GM12878 (cell line): ENCODE measurements at regions of chrX and their contacts with region 1.

Region 1: GRCh38 chrX:15854712-15855567 is at the start of gene AP1S2:
- DNase-seq: peak; percentile 90
- ATAC-seq: peak; percentile 94
- H3K4me3 ChIP-seq: peak within 1 kb of the TSS; percentile 90
- H3K27ac ChIP-seq: peak within 1 kb of the TSS; percentile 90
- H3K4me1 ChIP-seq: 0 out of 2 replicates have a peak, but pooled peaks cover 3% of the 10 kb centered on the region
- H3K27me3 ChIP-seq: no peaks in the 10 kb centered on the region
- CTCF ChIP-seq: no peak
- EP300 ChIP-seq: no peak; a peak in 1 of 4 replicates
- POLR2A ChIP-seq: peak; percentile 62
- RAD21 ChIP-seq: no peak
- polyA plus RNA-seq, gene AP1S2: 25.6 to 36.6 TPM

Region 2: DNA sequence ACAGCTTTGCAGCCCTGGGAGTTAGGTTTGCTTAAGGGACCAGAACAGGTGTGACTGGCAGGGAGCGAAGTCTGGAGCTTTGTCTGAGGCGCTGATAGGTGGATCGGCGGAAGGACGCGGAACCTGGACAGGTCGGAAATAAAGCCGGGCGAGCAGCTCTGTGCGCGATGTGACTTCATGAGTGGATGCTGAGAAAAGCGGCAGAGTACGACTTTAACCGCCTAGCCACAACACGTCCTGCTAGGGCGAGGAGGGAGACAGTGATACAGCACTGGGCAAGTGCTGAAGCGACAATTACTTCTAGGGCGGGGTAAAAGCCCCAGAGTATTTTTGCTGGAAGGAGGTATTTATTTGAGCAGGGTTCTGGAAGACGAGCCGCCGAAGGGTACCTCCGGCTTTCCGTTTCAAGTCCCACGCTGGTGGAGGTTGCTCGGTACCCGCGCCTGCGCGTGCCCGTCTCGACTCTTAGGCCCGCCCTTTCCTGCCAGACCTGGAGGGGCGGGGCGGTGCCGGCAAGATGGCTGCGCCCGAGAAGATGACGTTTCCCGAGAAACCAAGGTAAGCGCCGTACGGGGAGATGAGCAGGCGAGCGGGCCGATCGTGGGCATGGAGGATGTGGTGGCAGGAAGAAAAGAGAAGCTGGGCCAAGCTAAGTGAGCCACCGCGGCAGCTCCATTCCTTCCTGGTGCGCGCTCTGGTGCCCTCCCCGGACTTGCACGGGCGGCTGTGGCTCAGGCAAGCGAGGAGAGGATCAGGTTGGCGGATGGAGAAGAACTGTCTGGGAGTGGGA is 64.8 kb before region 1 on chrX and contains the start of gene ZRSR2:
- CTCF ChIA-PET with region 1: interaction called, 8 read pairs
- POLR2A ChIA-PET with region 1: interaction called, 18 read pairs
- RAD21 ChIA-PET with region 1: interaction called, 4 read pairs
- SMC1A ChIA-PET with region 1: interaction called, 16 read pairs
- in situ Hi-C with region 1: no loop called
- intact Hi-C with region 1: loop called (anchors 2 kb)
- DNase-seq: peak; percentile 58
- ATAC-seq: peak; percentile 96
- H3K4me3 ChIP-seq: peak within 1 kb of the TSS; percentile 71
- H3K27ac ChIP-seq: peak within 1 kb of the TSS; percentile 68
- H3K4me1 ChIP-seq: no peaks in the 10 kb centered on the region
- H3K27me3 ChIP-seq: no peaks in the 10 kb centered on the region
- CTCF ChIP-seq: no peak
- EP300 ChIP-seq: no peak
- POLR2A ChIP-seq: peak; percentile 88
- RAD21 ChIP-seq: no peak
- polyA plus RNA-seq, gene ZRSR2: 10.5 to 14.0 TPM

Region 3: DNA sequence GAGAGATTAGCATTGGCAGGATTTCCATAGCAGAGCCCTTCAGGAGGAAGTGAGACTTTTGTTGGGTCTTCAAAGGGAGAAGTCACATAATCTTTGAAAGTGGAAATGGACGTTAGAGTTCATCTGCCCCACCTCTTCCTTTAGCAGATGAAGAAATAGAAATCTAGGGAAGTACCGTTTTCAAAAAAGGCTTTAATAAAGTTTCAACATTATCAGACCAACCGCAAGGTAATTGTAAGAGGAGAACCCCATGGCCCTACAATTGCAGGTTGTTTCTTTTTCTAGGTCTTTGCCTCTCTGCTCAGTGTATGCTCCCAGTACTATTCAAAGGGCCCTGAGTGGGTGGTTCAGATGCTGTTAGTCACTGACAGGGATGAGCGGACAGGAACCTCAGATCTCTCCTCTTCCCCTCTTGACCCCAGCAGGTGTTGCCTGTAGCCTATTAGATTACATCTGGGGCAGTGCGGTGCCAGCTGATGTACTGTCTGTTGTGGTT is 48.3 kb after region 1 on chrX:
- CTCF ChIA-PET with region 1: interaction called, 6 read pairs
- POLR2A ChIA-PET with region 1: interaction called, 5 read pairs
- RAD21 ChIA-PET with region 1: interaction called, 20 read pairs
- SMC1A ChIA-PET with region 1: interaction called, 16 read pairs
- in situ Hi-C with region 1: no loop called
- intact Hi-C with region 1: loop called (anchors 1 kb)
- DNase-seq: peak; percentile 84
- ATAC-seq: peak; percentile 98
- H3K4me3 ChIP-seq: no peak overlapping the region
- H3K27ac ChIP-seq: peak overlapping the region; percentile 69
- H3K4me1 ChIP-seq: peaks cover 16% of the 10 kb centered on the region
- H3K27me3 ChIP-seq: no peaks in the 10 kb centered on the region
- CTCF ChIP-seq: no peak
- EP300 ChIP-seq: peak in 1 of 2 experiments; percentile 46; a peak in 1 of 4 replicates
- POLR2A ChIP-seq: no peak
- RAD21 ChIP-seq: no peak; the same call in 1 of the 2 replicates

Region 4: DNA sequence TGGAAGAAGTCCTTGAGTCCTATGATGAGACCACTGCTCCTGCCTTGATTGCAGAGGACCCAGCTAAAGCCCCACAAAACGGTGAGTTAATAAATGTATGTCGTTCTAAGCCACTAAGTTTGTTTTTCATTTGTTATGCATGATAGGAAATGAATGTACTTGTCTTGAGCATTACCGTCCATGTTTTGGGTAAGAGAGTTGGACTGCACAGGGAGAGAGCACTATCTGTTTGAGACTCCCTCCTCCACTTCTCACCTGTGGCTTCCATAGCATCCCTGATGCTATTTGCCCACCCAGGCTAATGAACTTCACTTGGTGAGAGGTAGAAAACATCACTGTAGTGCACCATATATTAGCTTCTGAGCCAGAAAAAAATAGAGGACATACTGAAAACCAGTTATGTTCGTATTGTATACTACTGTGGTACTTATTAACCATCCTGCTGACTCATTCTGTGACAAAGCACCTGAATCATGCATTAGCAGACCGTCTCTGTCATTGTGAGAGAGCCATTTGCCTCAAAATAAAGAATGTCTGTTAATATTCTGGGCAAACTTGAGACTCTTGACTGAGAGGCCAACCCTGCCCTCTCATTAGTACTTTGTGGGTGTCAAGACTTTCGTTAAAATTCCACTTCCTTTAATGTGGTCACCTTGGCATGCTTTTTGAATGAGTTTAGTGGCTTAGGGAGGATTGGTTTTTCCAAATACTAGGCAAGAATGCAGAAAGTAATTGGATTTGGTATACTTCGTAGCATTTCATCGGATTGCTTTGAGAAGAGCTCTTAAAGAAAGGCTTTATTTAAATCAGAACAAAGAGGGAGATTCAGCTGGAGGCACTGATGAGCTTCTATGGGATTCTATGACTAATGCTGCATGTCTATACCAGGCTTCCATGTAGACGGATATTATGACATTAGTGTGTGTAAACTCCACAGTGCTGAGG is 169.1 kb after region 1 on chrX:
- CTCF ChIA-PET with region 1: no interaction called
- POLR2A ChIA-PET with region 1: no interaction called
- RAD21 ChIA-PET with region 1: interaction called, 5 read pairs
- SMC1A ChIA-PET with region 1: no interaction called
- in situ Hi-C with region 1: no loop called
- intact Hi-C with region 1: loop called (anchors 1 kb)
- DNase-seq: peak; percentile 77
- ATAC-seq: peak; percentile 96
- H3K4me3 ChIP-seq: no peak overlapping the region
- H3K27ac ChIP-seq: peak overlapping the region; percentile 24; the same call in 1 of the 2 replicates
- H3K4me1 ChIP-seq: peaks cover 4% of the 10 kb centered on the region; the same call in 1 of the 2 replicates
- H3K27me3 ChIP-seq: 0 out of 4 replicates have a peak, but pooled peaks cover 0 to 2% of the 10 kb centered on the region in 2 experiments
- CTCF ChIP-seq: no peak
- EP300 ChIP-seq: peak; percentile 84 to 88; a peak in 3 of 4 replicates
- POLR2A ChIP-seq: no peak
- RAD21 ChIP-seq: no peak

Region 5: DNA sequence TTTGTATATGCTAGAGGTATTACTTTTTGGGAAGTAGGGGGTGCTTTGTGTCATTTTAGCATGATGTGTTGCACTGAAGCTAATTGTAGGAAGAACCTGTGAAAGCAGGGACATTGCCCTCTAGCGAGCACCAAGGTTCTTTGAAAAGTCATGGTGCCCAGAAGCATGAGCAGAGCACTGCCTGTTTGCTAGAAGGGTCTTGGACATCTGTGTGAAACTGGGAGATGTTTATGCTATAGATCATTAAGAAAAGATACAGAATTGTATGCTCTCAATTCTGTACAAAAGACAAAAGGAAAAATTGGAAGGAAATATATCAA is 283.1 kb after region 1 on chrX:
- CTCF ChIA-PET with region 1: interaction called, 28 read pairs
- POLR2A ChIA-PET with region 1: no interaction called
- RAD21 ChIA-PET with region 1: no interaction called
- SMC1A ChIA-PET with region 1: interaction called, 15 read pairs
- in situ Hi-C with region 1: no loop called
- intact Hi-C with region 1: loop called (anchors 5 kb)
- DNase-seq: peak; percentile 16
- ATAC-seq: peak; percentile 82
- H3K4me3 ChIP-seq: no peak overlapping the region
- H3K27ac ChIP-seq: no peak overlapping the region
- H3K4me1 ChIP-seq: peaks cover 3% of the 10 kb centered on the region
- H3K27me3 ChIP-seq: peaks cover 0 to 2% of the 10 kb centered on the region in 2 experiments; a peak in 3 of 4 replicates
- CTCF ChIP-seq: peak; percentile 44 to 52 (median 51); a peak in 5 of 6 replicates
- EP300 ChIP-seq: no peak
- POLR2A ChIP-seq: no peak
- RAD21 ChIP-seq: peak; percentile 57

Region 6: DNA sequence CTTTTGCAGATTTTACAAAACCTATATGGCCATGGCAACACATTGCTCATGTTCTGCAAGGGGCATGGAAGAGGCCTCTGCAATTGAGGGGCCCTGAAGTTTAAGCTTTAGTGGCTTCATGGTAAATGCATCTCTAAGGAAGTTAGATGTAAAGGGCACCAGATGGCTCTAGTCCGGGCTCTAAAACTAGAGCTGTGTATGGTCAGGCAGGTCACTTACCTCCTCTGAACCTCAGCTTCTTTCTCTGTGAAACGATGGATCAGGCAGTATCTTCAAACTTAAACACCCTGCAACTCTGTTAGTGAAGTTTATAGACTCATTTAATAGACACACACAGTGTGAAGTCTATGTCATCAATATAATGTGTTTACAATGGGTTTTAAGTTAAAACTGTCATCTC is 322.3 kb after region 1 on chrX:
- CTCF ChIA-PET with region 1: no interaction called
- POLR2A ChIA-PET with region 1: no interaction called
- RAD21 ChIA-PET with region 1: no interaction called
- SMC1A ChIA-PET with region 1: no interaction called
- in situ Hi-C with region 1: no loop called
- intact Hi-C with region 1: no loop called
- DNase-seq: no peak
- ATAC-seq: no peak
- H3K4me3 ChIP-seq: no peak overlapping the region
- H3K27ac ChIP-seq: no peak overlapping the region
- H3K4me1 ChIP-seq: no peaks in the 10 kb centered on the region
- H3K27me3 ChIP-seq: no peaks in the 10 kb centered on the region
- CTCF ChIP-seq: no peak
- EP300 ChIP-seq: no peak
- POLR2A ChIP-seq: no peak
- RAD21 ChIP-seq: no peak

Region 7: GRCh38 chrX:16445166-16445752 is 590.3 kb after region 1 on chrX:
- CTCF ChIA-PET with region 1: interaction called, 11 read pairs
- POLR2A ChIA-PET with region 1: no interaction called
- RAD21 ChIA-PET with region 1: no interaction called
- SMC1A ChIA-PET with region 1: no interaction called
- in situ Hi-C with region 1: no loop called
- intact Hi-C with region 1: loop called (anchors 5 kb)
- DNase-seq: no peak
- ATAC-seq: peak; percentile 96
- H3K4me3 ChIP-seq: no peak overlapping the region
- H3K27ac ChIP-seq: no peak overlapping the region
- H3K4me1 ChIP-seq: no peaks in the 10 kb centered on the region
- H3K27me3 ChIP-seq: no peaks in the 10 kb centered on the region; a peak in 2 of 4 replicates
- CTCF ChIP-seq: peak; percentile 73 to 89 (median 74)
- EP300 ChIP-seq: no peak
- POLR2A ChIP-seq: no peak
- RAD21 ChIP-seq: peak; percentile 72